ENCODE measurements at regions of chr11 and their contacts with region 1.

Region 1: GRCh38 chr11:59135648-59136461 is 6.8 kb upstream of the FAM111A start:
- DNase-seq: peak; percentile 93
- ATAC-seq: peak; percentile 100
- H3K4me3 Mint-ChIP-seq: peak overlapping the region; percentile 59
- H3K27ac Mint-ChIP-seq: no peak overlapping the region
- H3K4me1 Mint-ChIP-seq: peaks cover 2% of the 10 kb centered on the region; the same call in 1 of the 2 replicates
- H3K27me3 Mint-ChIP-seq: peaks cover 6% of the 10 kb centered on the region; the same call in 1 of the 2 replicates
- CTCF ChIP-seq: peak; percentile 92

Region 2: GRCh38 chr11:58900479-58901420 is 235.1 kb before region 1 on chr11:
- CTCF ChIA-PET with region 1: interaction called, 28 read pairs
- POLR2A ChIA-PET with region 1: no interaction called
- DNase-seq: peak; percentile 96
- ATAC-seq: peak; percentile 77
- H3K4me3 Mint-ChIP-seq: peak overlapping the region; percentile 62
- H3K27ac Mint-ChIP-seq: peak overlapping the region; percentile 42; the same call in 1 of the 2 replicates
- H3K4me1 Mint-ChIP-seq: peaks cover 45% of the 10 kb centered on the region
- H3K27me3 Mint-ChIP-seq: peaks cover 48% of the 10 kb centered on the region
- CTCF ChIP-seq: peak; percentile 59; the same call in 1 of the 2 replicates

Region 3: DNA sequence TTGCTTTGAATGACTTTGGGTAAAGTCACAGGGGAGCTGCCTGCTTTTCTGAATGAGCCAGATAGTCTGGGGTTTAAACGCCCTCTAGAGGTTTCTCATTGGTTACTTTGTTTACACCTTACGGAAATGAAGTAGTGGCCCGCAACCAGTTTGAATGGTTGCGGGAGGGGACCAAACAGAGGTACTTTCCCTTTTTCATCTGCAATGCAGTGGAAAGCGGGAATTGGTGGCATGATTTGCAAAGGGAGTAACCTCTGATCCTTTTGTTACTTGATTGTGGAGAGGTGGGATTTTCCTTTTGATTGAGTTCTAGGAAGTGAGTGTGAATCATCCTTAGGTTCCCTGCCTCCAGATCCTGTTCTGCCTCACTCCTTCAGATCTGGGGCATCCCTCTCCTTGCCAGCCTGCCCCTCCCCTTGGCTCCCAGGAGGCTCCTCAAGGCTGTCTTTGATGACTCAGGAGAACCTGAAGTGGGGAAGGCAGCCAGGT is 212.5 kb before region 1 on chr11:
- CTCF ChIA-PET with region 1: interaction called, 31 read pairs
- POLR2A ChIA-PET with region 1: no interaction called
- DNase-seq: peak; percentile 43
- ATAC-seq: peak; percentile 56
- H3K4me3 Mint-ChIP-seq: peak overlapping the region; percentile 63
- H3K27ac Mint-ChIP-seq: peak overlapping the region; percentile 94
- H3K4me1 Mint-ChIP-seq: peaks cover 48% of the 10 kb centered on the region
- H3K27me3 Mint-ChIP-seq: peaks cover under 1% of the 10 kb centered on the region; the same call in 1 of the 2 replicates
- CTCF ChIP-seq: no peak

Region 4: DNA sequence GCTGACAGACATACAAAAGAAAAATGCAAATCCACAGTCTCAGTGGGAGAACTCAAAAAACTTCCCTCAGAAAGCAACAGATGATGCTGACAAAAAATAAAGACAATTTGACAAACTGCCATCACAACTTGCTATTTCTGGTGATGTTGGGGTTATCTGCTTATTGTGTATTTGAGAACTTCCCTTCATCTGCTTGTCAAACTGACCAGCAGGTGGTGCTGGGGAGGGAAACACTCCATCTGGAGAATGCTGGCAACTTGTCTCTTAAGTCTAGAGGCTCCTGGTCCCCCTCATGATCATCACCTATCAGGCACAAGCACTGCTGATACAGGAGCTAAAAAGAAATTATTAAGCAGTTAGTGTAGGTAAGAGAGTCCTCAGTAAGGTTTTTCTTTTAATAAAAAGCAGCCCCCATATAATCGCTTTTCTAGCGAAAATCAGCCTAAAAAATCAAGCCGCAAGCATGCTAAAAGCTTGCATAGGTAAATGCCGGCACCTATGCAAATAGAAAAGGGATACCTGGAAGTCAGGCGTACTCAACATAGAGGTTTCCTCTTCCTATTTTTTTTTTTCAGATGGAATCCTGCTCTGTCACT is 38.6 kb before region 1 on chr11:
- CTCF ChIA-PET with region 1: interaction called, 11 read pairs
- POLR2A ChIA-PET with region 1: no interaction called
- DNase-seq: peak; percentile 63
- ATAC-seq: peak; percentile 17; the same call in 1 of the 2 replicates
- H3K4me3 Mint-ChIP-seq: no peak overlapping the region
- H3K27ac Mint-ChIP-seq: no peak overlapping the region
- H3K4me1 Mint-ChIP-seq: peaks cover 84% of the 10 kb centered on the region
- H3K27me3 Mint-ChIP-seq: no peaks in the 10 kb centered on the region
- CTCF ChIP-seq: peak; percentile 28; the same call in 1 of the 2 replicates

Measured in WTC11 (cell line).